Breast epithelium (tissue), 4 donors: ENCODE measurements at regions of chr14 and their contacts with region 1.

Region 1: GRCh38 chr14:86946446-86946845 is 1046.5 kb downstream of the GALC start:
- DNase-seq: no peak
- H3K4me3 ChIP-seq: no peak overlapping the region
- H3K27ac ChIP-seq: no peak overlapping the region
- H3K4me1 ChIP-seq: no peaks in the 10 kb centered on the region
- H3K27me3 ChIP-seq: no peaks in the 10 kb centered on the region
- CTCF ChIP-seq: no peak
- POLR2A ChIP-seq: no peak

Region 2: GRCh38 chr14:86971292-86971691 is 24.8 kb after region 1 on chr14:
- intact Hi-C with region 1: loop called (anchors 1 kb)
- DNase-seq: no peak
- H3K4me3 ChIP-seq: no peak overlapping the region
- H3K27ac ChIP-seq: no peak overlapping the region
- H3K4me1 ChIP-seq: no peaks in the 10 kb centered on the region
- H3K27me3 ChIP-seq: no peaks in the 10 kb centered on the region
- CTCF ChIP-seq: no peak
- POLR2A ChIP-seq: no peak

Region 3: DNA sequence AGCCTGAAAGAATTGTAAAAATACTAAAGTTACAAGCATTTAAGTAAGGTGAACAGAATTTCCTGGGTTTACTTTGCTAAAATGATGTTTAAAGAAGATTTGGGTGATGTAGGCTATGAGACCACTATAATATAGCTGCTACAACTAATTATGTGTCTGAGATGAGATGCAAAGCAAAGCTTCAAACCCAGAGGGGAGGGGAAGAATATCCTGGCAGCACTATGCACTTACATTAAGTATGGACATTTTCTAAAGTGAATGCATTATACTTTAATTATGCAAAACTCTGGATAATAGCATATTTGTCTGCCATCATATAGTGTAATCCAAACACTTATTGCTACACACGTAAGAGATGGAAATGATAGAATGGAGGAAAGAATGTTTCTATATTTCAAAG is 42.8 kb after region 1 on chr14:
- intact Hi-C with region 1: no loop called
- DNase-seq: no peak
- H3K4me3 ChIP-seq: no peak overlapping the region
- H3K27ac ChIP-seq: no peak overlapping the region
- H3K4me1 ChIP-seq: no peaks in the 10 kb centered on the region
- H3K27me3 ChIP-seq: no peaks in the 10 kb centered on the region
- CTCF ChIP-seq: no peak
- POLR2A ChIP-seq: no peak

Region 4: DNA sequence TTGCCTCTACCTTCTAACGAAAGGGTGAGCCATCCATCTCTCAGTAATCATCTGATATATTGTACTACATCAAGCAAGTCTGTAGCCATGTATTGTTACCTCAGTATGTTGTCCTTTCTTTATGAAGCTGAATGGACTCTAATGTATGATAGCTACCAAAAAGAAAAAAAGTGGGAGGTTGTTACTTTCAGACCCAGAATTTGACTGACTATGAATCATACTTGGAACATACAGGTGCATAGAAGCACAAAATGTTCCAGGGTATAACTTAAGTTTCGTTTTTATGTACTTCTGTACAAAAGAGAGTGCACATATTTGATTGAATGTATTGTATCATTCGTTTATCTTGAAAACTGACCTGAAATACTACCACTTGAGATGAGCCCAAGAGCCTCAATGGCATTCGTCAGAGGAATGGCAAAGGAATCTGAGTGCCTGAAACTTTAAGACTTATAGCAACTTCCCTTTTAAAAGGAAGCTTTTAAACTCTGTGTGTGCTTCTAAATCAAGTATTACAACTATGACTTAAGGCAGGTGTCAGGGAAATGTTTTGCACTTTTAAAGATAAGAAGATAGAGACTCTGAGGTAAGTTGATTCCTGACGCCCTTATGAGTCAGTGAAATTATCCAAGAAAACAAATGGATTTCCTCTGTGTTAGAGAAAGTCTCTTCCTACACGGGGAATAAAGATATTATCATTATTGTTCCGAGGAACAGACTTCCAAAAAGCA is 95.0 kb after region 1 on chr14:
- intact Hi-C with region 1: no loop called
- DNase-seq: no peak
- H3K4me3 ChIP-seq: no peak overlapping the region
- H3K27ac ChIP-seq: no peak overlapping the region
- H3K4me1 ChIP-seq: no peaks in the 10 kb centered on the region
- H3K27me3 ChIP-seq: no peaks in the 10 kb centered on the region
- CTCF ChIP-seq: no peak
- POLR2A ChIP-seq: no peak